Caco-2 (cell line): ENCODE measurements at regions of chr20 and their contacts with region 1.

Region 1: DNA sequence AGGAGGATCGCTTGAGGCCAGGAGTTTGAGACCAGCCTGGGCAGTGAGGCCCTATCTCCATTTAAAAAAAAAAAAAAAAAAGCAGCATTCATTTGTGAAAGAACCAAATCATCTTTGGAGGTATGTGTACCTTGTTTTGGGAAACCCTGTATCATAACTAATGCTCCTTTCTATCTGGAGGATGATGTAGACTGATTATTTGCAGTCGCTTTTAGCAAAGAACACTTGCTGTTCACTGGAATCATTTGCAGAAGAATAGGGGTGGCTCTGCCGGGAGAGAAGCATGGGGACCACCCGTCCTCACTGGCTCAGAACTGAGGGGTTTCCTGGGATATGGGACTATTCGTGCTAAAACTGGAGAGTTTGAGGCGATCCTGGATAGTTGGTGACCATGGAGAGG is 68.9 kb upstream of the SULF2 start:
- DNase-seq: no peak
- H3K4me3 ChIP-seq: no peak overlapping the region
- H3K4me3 Mint-ChIP-seq: no peak overlapping the region
- H3K27ac Mint-ChIP-seq: no peak overlapping the region
- H3K4me1 ChIP-seq: peaks cover 13% of the 10 kb centered on the region
- H3K4me1 Mint-ChIP-seq: peaks cover 13% of the 10 kb centered on the region
- H3K27me3 ChIP-seq: no peaks in the 10 kb centered on the region
- H3K27me3 Mint-ChIP-seq: peaks cover 8% of the 10 kb centered on the region
- CTCF ChIP-seq: no peak

Region 2: GRCh38 chr20:47821481-47822439 is 32.4 kb before region 1 on chr20:
- CTCF ChIA-PET with region 1: no interaction called
- POLR2A ChIA-PET with region 1: no interaction called
- intact Hi-C with region 1: no loop called
- DNase-seq: peak in 1 of 2 experiments; percentile 61
- H3K4me3 ChIP-seq: no peak overlapping the region
- H3K4me3 Mint-ChIP-seq: no peak overlapping the region
- H3K27ac Mint-ChIP-seq: no peak overlapping the region
- H3K4me1 ChIP-seq: no peaks in the 10 kb centered on the region
- H3K4me1 Mint-ChIP-seq: no peaks in the 10 kb centered on the region
- H3K27me3 ChIP-seq: no peaks in the 10 kb centered on the region; the same call in 1 of the 2 replicates
- H3K27me3 Mint-ChIP-seq: peaks cover 23% of the 10 kb centered on the region
- CTCF ChIP-seq: no peak

Region 3: GRCh38 chr20:48188657-48189551 is 334.7 kb after region 1 on chr20:
- CTCF ChIA-PET with region 1: interaction called, 3 read pairs
- POLR2A ChIA-PET with region 1: no interaction called
- intact Hi-C with region 1: loop called (anchors 1 kb)
- DNase-seq: peak; percentile 67
- H3K4me3 ChIP-seq: no peak overlapping the region
- H3K4me3 Mint-ChIP-seq: no peak overlapping the region
- H3K27ac Mint-ChIP-seq: no peak overlapping the region
- H3K4me1 ChIP-seq: peaks cover 18% of the 10 kb centered on the region
- H3K4me1 Mint-ChIP-seq: peaks cover 26% of the 10 kb centered on the region
- H3K27me3 ChIP-seq: no peaks in the 10 kb centered on the region
- H3K27me3 Mint-ChIP-seq: no peaks in the 10 kb centered on the region
- CTCF ChIP-seq: peak; percentile 45 to 90